A673 (cell line): ENCODE measurements at regions of chr10 and their contacts with region 1.

Region 1: DNA sequence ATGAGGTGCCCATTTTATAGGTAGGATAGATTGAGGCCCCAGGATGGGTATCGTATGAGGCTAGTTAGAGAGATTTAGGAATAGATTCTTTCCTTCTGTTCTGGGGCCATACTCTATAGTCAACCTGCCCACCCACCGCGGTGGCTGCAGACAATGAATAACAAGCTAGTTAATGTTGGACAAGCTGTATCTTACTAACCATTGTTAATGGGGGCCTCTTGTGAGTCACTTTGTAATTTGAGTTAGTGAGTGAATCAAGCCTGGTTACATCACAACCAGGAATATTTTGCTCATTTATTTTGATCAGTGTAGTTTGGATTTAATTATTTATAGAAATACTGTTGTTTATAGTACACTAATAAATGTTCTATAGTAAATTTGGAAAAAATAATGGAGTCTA is 7.3 kb downstream of the SORCS3 start:
- DNase-seq: no peak
- H3K4me3 ChIP-seq: no peak overlapping the region
- H3K27ac ChIP-seq: no peak overlapping the region
- H3K4me1 ChIP-seq: no peaks in the 10 kb centered on the region
- H3K27me3 ChIP-seq: peaks cover 91% of the 10 kb centered on the region
- CTCF ChIP-seq: no peak

Region 2: GRCh38 chr10:104931612-104932134 is 283.3 kb after region 1 on chr10:
- CTCF ChIA-PET with region 1: no interaction called
- POLR2A ChIA-PET with region 1: no interaction called
- intact Hi-C with region 1: loop called (anchors 5 kb)
- DNase-seq: no peak
- H3K4me3 ChIP-seq: no peak overlapping the region
- H3K27ac ChIP-seq: no peak overlapping the region
- H3K4me1 ChIP-seq: no peaks in the 10 kb centered on the region
- H3K27me3 ChIP-seq: peaks cover 24% of the 10 kb centered on the region
- CTCF ChIP-seq: no peak